ENCODE measurements at regions of chr9 and their contacts with region 1.

Region 1: DNA sequence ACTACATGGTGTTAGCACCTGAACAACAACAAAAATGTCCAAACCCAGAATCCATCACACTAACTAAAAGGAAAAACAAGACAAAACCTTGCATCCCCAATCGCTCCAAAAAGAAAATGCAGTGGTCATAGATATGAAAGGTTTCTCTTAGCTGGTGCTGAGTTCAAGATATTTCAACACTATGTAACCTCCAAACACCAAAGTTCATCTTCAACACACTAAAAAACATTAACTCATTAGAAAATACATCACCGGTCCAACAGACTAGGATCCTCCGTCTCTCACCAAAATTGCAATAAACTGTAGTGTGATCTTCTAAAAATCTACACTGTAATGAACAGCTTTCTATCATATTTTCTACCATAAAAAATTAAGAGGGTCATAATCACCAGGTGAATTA is 60.8 kb downstream of the ECPAS start:
- DNase-seq: no peak
- ATAC-seq: no peak
- H3K4me3 ChIP-seq: no peak overlapping the region
- H3K27ac ChIP-seq: no peak overlapping the region
- H3K4me1 ChIP-seq: peaks cover 6% of the 10 kb centered on the region
- H3K27me3 ChIP-seq: no peaks in the 10 kb centered on the region
- CTCF ChIP-seq: no peak

Region 2: DNA sequence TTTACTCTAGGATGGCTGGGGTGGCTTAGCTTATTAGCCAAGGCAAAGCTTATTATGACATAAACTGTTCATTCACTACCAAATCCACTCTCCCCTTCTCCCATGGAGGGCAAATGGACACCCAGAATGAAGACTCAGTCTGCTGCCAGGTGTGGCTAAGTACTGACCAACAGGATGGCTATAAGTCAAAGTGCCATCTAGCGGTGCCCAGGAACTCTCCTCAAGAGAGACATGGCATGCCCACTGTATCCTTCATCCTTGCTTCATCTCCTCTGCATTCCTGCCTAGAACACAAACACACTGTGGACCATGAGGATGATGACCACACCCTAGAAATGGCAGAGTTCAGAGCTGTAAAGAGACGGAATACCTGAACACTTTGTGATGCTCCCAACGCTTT is 53.5 kb before region 1 on chr9:
- intact Hi-C with region 1: loop called in 1 of 2 experiments (anchors 5 kb)
- DNase-seq: no peak
- ATAC-seq: no peak
- H3K4me3 ChIP-seq: no peak overlapping the region
- H3K27ac ChIP-seq: no peak overlapping the region
- H3K4me1 ChIP-seq: no peaks in the 10 kb centered on the region
- H3K27me3 ChIP-seq: no peaks in the 10 kb centered on the region
- CTCF ChIP-seq: no peak

Region 3: GRCh38 chr9:111386386-111386785 is 37.0 kb before region 1 on chr9:
- intact Hi-C with region 1: loop called in 1 of 2 experiments (anchors 5 kb)
- DNase-seq: no peak
- ATAC-seq: no peak
- H3K4me3 ChIP-seq: no peak overlapping the region
- H3K27ac ChIP-seq: no peak overlapping the region
- H3K4me1 ChIP-seq: no peaks in the 10 kb centered on the region
- H3K27me3 ChIP-seq: no peaks in the 10 kb centered on the region
- CTCF ChIP-seq: no peak

Region 4: GRCh38 chr9:111516061-111516465 is 92.7 kb after region 1 on chr9:
- intact Hi-C with region 1: no loop called
- DNase-seq: no peak
- ATAC-seq: no peak
- H3K4me3 ChIP-seq: no peak overlapping the region
- H3K27ac ChIP-seq: no peak overlapping the region
- H3K4me1 ChIP-seq: no peaks in the 10 kb centered on the region
- H3K27me3 ChIP-seq: no peaks in the 10 kb centered on the region
- CTCF ChIP-seq: no peak

Region 5: GRCh38 chr9:113178087-113178486 is 1754.7 kb after region 1 on chr9:
- intact Hi-C with region 1: loop called in 1 of 2 experiments (anchors 5 kb)
- DNase-seq: no peak
- ATAC-seq: no peak
- H3K4me3 ChIP-seq: no peak overlapping the region
- H3K27ac ChIP-seq: no peak overlapping the region
- H3K4me1 ChIP-seq: no peaks in the 10 kb centered on the region
- H3K27me3 ChIP-seq: no peaks in the 10 kb centered on the region
- CTCF ChIP-seq: no peak

Measured in psoas muscle (tissue), 8 donors.